Heart left ventricle (tissue), 16 donors: ENCODE measurements at regions of chrX and their contacts with region 1.

Region 1: GRCh38 chrX:120560842-120561633 is at the start of gene CUL4B:
- DNase-seq: peak; percentile 92 to 94 (median 94)
- ATAC-seq: peak; percentile 94 to 96 (median 96)
- H3K4me3 ChIP-seq: peak within 1 kb of the TSS; percentile 42 to 94 (median 68)
- H3K27ac ChIP-seq: peak within 1 kb of the TSS; percentile 94 to 100 (median 97)
- H3K4me1 ChIP-seq: peaks cover 0 to 32% (median 10%) of the 10 kb centered on the region in 12 donors
- H3K27me3 ChIP-seq: no peaks in the 10 kb centered on the region
- CTCF ChIP-seq: no peak
- POLR2A ChIP-seq: peak in 1 of 2 donors; percentile 64
- total RNA-seq, gene CUL4B: 13.4 to 28.5 (median 19.7) TPM

Region 2: DNA sequence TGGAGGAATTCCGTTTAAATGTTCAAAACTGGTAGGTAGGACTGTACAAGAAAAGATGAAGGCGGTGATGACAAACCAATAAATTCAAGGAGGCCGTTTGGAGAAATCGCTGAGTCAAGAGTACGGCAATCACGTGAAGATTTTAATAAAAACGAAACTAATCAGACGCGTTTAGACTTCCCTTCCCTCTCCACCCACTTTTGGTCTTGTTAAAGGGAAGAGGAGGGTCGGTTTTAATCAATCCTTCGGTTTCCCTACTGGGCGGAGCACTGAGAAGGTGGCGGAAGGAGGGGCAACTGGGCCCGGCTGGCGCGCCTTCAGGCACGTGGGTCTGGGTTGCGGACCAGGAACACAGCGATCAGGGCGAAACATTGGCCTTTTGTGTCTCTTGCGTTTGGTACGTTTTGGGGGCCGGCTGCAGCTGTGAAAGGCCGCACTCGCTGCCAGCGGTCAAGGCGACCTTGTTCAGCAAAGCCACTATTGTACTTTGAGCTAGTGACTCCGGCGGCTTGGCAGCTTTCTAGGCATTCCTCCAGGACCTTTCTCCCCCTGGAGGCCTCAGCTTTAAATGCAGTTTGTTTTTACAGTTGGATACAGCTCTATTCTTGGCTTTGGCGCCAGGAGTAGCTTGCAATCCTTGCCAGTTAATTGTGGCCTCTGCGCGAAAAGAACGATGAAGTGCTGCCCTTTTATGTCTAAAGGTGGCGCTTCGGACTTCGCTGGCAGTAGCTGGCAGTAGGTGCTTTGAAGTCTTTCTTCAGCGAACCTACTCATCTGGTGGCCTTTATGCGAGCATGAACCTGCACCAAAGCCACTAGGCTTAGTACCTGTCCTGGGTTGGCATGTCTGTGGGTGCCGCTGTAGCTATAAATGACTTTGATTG is 75.2 kb before region 1 on chrX:
- intact Hi-C with region 1: loop called in 1 of 10 experiments (anchors 2 kb)
- DNase-seq: peak; percentile 74 to 87 (median 79)
- ATAC-seq: peak; percentile 90 to 96 (median 93)
- H3K4me3 ChIP-seq: peak overlapping the region; percentile 19 to 64 (median 51)
- H3K27ac ChIP-seq: peak overlapping the region; percentile 75 to 96 (median 88)
- H3K4me1 ChIP-seq: peaks cover 0 to 9% (median 0%) of the 10 kb centered on the region in 12 donors
- H3K27me3 ChIP-seq: no peaks in the 10 kb centered on the region
- CTCF ChIP-seq: peak; percentile 34 to 67 (median 52)
- POLR2A ChIP-seq: no peak

Region 3: DNA sequence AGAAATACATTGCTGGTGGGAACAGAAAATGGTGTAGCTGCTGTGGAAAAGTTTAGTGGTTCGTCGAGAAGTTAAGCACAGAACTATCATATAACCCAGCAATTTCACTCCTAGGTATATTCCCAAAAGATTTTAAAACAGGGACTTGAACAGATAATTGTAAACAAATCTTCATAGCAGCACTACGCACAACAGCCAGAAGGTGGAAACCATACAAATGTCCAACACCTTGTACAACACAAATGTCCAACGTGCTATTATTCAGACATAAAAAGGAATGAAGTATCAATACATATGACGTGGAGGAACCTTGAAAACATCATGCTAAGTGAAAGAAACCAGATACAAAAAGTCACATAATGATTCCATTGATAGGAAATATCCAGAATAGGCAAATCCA is 38.2 kb before region 1 on chrX:
- intact Hi-C with region 1: no loop called
- DNase-seq: no peak
- ATAC-seq: no peak
- H3K4me3 ChIP-seq: no peak overlapping the region
- H3K27ac ChIP-seq: no peak overlapping the region
- H3K4me1 ChIP-seq: no peaks in the 10 kb centered on the region
- H3K27me3 ChIP-seq: no peaks in the 10 kb centered on the region
- CTCF ChIP-seq: no peak
- POLR2A ChIP-seq: no peak

Region 4: DNA sequence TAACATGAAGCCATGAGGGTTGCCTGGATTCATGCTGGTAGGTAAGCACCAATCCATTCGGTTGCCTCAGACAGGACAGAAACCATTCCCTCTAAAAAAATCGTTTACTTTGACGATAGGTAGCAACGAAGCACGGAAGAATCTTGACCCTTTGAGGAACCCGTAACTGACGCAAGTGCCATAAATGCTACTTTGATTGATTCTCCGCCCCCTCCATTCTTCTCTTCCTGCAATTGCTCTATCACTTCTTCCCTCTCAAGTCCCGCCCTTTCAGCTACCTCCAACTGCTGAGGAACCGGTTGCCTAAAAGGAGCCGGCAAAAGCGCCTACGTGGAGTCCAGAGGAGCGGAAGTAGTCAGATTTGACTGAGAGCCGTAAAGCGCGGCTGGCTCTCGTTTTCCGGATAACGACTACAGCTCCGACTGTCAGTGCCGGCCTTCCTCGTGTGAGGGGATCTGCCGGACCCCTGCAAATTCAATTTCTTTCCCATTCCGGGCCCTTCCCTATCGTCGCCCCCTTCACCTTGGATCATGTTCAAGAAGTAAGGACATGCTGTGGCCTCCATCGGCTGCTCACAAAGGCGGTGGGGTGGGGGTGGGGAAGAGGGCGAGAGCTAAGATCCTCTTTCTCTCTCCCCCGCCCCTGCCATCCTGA is 42.8 kb after region 1 on chrX and contains the start of gene MCTS1:
- intact Hi-C with region 1: loop called (anchors 1 to 5 kb)
- DNase-seq: peak; percentile 78 to 87 (median 85)
- ATAC-seq: peak; percentile 95 to 97 (median 96)
- H3K4me3 ChIP-seq: peak within 1 kb of the TSS; percentile 18 to 82 (median 70)
- H3K27ac ChIP-seq: peak within 1 kb of the TSS; percentile 77 to 93 (median 86)
- H3K4me1 ChIP-seq: peaks cover 0 to 17% (median 8%) of the 10 kb centered on the region in 12 donors
- H3K27me3 ChIP-seq: no peaks in the 10 kb centered on the region
- CTCF ChIP-seq: no peak
- POLR2A ChIP-seq: peak in 1 of 2 donors; percentile 48
- total RNA-seq, gene MCTS1: 17.6 to 47.3 (median 34.1) TPM